Activated CD8-positive, alpha-beta memory T cell treated with anti-CD3 and anti-CD28 coated beads, Interleukin-2, amount 10 ng/mL, durations not matched to agents 7 days and 5 days (primary cell): ENCODE measurements at regions of chr6 and their contacts with region 1.

Region 1: DNA sequence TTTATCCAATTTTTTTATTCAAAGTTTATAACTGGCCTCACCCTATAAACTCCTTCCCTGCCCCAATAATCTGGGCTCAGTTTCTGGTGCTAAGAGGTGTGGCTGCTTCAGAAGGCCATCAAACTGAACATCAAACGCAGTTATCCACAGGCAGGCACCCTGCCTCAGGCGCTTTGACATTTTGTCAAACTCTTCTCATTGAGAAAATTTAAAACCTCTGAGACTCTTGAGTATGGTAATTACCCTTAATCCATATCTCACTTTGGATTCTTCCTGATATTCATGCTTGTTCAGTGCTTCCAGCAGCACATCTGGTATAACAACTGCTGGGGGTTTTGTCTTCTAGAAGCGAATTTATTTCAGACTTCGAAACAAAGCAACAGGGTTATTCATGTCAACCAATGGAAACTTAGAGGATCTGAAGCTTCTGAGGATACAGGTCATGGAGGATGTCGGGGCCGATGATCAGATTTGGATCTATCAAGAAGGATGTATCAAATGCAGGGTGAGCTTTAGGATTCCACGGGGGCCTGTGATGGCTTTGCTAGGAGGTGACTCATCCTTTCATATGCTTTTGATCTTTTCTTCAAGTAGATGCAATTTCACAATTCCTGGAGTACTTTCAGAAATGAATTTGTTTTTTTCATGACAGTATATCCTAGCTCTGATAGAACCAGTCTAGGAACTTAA is 68.2 kb downstream of the RTN4IP1 start:
- DNase-seq: no peak
- ATAC-seq: no peak
- H3K4me3 Mint-ChIP-seq: no peak overlapping the region
- H3K27ac Mint-ChIP-seq: no peak overlapping the region
- H3K4me1 Mint-ChIP-seq: peaks cover 6% of the 10 kb centered on the region
- H3K27me3 Mint-ChIP-seq: no peaks in the 10 kb centered on the region

Region 2: DNA sequence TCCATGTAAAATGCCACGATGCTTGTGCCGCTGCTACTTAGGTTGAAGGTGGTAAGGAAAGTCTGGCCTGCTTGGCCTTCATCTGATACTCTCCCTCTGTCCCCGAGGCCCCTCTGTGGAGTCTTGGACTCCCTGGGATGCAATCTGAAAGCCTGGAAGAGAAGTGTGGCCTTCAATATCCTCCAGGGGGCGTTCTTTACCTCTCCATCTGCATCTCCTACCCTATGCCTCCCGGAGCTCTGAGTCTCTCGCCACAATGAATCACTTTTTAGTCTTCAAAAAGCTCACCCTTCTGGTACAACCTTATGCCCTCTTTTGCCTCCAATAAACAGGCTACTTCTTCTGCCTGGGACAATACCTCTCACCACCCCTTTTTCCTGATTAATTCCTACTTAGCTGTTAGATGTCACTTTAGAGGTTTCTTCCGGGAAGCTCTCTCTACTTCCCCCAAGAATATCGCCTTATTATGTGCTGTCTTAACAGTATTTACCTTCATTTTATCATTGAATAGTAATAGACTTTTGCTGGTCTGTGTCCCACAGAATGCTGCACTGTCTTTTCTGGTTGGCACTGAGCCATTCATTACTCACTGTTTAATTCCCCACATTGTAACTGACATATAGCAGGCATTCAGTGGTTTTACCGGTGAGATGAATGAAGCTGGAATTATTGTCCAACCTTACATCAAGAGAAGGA is 221.7 kb before region 1 on chr6:
- CTCF ChIA-PET with region 1: interaction called, 15 read pairs
- DNase-seq: peak; percentile 66
- ATAC-seq: peak; percentile 89
- H3K4me3 Mint-ChIP-seq: no peak overlapping the region
- H3K27ac Mint-ChIP-seq: no peak overlapping the region
- H3K4me1 Mint-ChIP-seq: peaks cover 5% of the 10 kb centered on the region
- H3K27me3 Mint-ChIP-seq: peaks cover 28% of the 10 kb centered on the region

Region 3: DNA sequence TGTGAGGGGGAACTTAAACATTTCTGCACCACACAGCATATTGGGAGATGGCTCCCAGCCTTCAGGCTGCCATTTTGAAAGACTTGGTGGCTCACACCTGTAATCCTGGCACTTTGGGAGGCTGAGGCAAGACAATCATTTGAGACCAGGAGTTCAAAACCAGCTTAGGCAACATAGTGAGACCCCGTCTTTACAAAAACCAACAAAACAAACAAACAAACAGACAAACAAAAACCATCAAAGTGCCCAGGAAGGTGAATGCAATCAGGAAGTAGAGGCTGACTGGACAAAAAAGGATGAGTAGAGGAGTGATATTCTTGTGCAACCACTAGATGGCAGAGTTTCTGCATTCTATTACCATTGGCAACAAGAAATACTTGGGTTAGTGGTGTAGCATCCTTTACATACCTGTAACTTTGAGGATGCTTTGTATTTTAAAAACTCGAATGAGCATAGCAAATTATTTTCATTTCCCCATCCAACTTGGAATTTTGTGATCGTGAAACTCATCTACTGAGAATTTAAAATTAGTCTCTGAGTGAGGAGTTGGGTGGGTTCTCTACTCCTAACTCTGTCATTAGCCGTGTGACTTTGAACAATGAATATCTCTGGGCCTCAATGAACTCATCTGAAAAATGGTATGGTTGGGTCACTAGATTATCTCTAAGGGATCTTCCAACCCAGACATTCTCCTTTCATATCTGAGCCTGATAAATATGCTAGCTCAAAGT is 116.2 kb before region 1 on chr6:
- CTCF ChIA-PET with region 1: interaction called, 117 read pairs
- DNase-seq: no peak
- ATAC-seq: peak; percentile 73
- H3K4me3 Mint-ChIP-seq: no peak overlapping the region
- H3K27ac Mint-ChIP-seq: no peak overlapping the region
- H3K4me1 Mint-ChIP-seq: peaks cover 19% of the 10 kb centered on the region
- H3K27me3 Mint-ChIP-seq: peaks cover 37% of the 10 kb centered on the region

Region 4: GRCh38 chr6:106466211-106466610 is 94.9 kb before region 1 on chr6:
- CTCF ChIA-PET with region 1: interaction called, 10 read pairs
- DNase-seq: no peak
- ATAC-seq: no peak
- H3K4me3 Mint-ChIP-seq: no peak overlapping the region
- H3K27ac Mint-ChIP-seq: no peak overlapping the region
- H3K4me1 Mint-ChIP-seq: no peaks in the 10 kb centered on the region
- H3K27me3 Mint-ChIP-seq: peaks cover 28% of the 10 kb centered on the region

Region 5: DNA sequence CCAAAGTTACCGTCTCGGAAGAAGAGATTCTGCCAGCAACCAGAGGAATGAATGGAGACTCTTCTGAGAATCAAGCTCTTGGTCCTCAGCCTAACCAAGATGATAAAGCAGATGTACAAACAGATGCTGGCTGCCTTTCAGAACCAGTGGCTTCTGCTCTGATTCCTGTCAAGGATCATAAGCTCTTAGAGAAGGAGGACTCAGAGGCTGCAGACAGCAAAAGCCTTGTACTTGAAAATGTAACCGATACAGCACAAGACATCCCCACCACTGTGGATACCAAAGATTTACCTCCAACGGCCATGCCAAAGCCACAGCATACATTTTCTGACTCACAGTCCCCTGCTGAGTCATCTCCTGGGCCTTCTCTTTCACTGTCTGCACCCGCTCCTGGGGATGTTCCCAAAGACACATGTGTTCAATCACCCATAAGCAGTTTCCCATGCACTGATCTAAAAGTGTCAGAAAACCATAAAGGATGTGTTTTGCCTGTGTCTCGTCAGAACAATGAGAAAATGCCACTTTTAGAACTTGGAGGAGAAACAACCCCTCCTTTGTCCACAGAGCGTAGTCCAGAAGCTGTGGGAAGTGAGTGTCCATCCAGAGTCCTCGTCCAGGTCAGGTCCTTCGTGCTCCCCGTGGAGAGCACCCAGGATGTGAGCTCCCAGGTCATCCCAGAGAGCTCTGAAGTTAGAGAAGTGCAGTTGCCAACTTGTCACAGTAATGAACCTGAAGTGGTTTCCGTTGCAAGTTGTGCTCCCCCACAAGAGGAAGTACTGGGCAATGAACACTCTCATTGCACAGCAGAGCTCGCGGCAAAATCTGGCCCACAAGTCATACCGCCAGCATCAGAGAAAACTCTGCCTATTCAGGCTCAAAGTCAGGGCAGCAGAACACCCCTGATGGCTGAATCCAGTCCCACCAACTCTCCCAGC is 41.4 kb before region 1 on chr6:
- CTCF ChIA-PET with region 1: interaction called, 11 read pairs
- DNase-seq: peak; percentile 95
- ATAC-seq: peak; percentile 66
- H3K4me3 Mint-ChIP-seq: peak overlapping the region; percentile 83
- H3K27ac Mint-ChIP-seq: peak overlapping the region; percentile 97
- H3K4me1 Mint-ChIP-seq: peaks cover 55% of the 10 kb centered on the region
- H3K27me3 Mint-ChIP-seq: no peaks in the 10 kb centered on the region